GM12878 (cell line): ENCODE measurements at regions of chr3 and their contacts with region 1.

Region 1: GRCh38 chr3:105366326-105367062 is at the start of gene ALCAM:
- DNase-seq: peak; percentile 77
- ATAC-seq: peak; percentile 66
- H3K4me3 ChIP-seq: peak within 1 kb of the TSS; percentile 88
- H3K27ac ChIP-seq: peak within 1 kb of the TSS; percentile 99
- H3K4me1 ChIP-seq: peaks cover 2% of the 10 kb centered on the region; the same call in 1 of the 2 replicates
- H3K27me3 ChIP-seq: no peaks in the 10 kb centered on the region
- CTCF ChIP-seq: peak; percentile 46 to 74 (median 52); a peak in 5 of 6 replicates
- EP300 ChIP-seq: no peak
- POLR2A ChIP-seq: peak; percentile 82
- RAD21 ChIP-seq: peak; percentile 86
- polyA plus RNA-seq, gene ALCAM: 12.2 to 16.2 TPM

Region 2: DNA sequence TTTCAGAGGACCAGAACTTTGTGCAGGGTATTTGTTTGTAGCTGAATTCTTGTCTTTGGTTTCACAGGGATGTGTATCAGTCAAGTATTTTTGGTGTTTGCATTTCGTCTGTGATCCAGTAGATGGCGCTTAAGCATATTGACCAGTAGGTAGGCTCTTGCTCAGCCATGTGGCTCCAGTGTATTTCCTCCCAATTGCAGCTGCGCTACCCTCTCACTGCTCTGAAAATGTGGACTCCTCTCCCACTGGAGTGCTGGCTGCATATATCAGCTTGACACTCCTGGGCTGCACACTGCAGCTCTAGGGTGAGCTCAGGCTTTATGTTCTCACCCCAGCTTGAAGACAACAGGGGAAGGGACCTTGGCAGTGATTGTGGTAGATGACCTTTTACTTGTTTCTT is 1264.1 kb before region 1 on chr3:
- CTCF ChIA-PET with region 1: no interaction called
- POLR2A ChIA-PET with region 1: no interaction called
- RAD21 ChIA-PET with region 1: no interaction called
- SMC1A ChIA-PET with region 1: interaction called, 4 read pairs
- in situ Hi-C with region 1: no loop called
- intact Hi-C with region 1: loop called (anchors 5 kb)
- DNase-seq: peak; percentile 23
- ATAC-seq: peak; percentile 95
- H3K4me3 ChIP-seq: no peak overlapping the region
- H3K27ac ChIP-seq: no peak overlapping the region
- H3K4me1 ChIP-seq: no peaks in the 10 kb centered on the region
- H3K27me3 ChIP-seq: no peaks in the 10 kb centered on the region
- CTCF ChIP-seq: peak; percentile 66 to 75 (median 73)
- EP300 ChIP-seq: no peak
- POLR2A ChIP-seq: no peak
- RAD21 ChIP-seq: peak; percentile 61

Region 3: GRCh38 chr3:104279617-104280016 is 1086.9 kb before region 1 on chr3:
- CTCF ChIA-PET with region 1: interaction called, 3 read pairs
- POLR2A ChIA-PET with region 1: no interaction called
- RAD21 ChIA-PET with region 1: no interaction called
- SMC1A ChIA-PET with region 1: no interaction called
- in situ Hi-C with region 1: loop called (anchors 5 kb)
- intact Hi-C with region 1: no loop called
- DNase-seq: no peak
- ATAC-seq: no peak
- H3K4me3 ChIP-seq: no peak overlapping the region
- H3K27ac ChIP-seq: no peak overlapping the region
- H3K4me1 ChIP-seq: no peaks in the 10 kb centered on the region
- H3K27me3 ChIP-seq: no peaks in the 10 kb centered on the region
- CTCF ChIP-seq: no peak
- EP300 ChIP-seq: no peak
- POLR2A ChIP-seq: no peak
- RAD21 ChIP-seq: no peak

Region 4: DNA sequence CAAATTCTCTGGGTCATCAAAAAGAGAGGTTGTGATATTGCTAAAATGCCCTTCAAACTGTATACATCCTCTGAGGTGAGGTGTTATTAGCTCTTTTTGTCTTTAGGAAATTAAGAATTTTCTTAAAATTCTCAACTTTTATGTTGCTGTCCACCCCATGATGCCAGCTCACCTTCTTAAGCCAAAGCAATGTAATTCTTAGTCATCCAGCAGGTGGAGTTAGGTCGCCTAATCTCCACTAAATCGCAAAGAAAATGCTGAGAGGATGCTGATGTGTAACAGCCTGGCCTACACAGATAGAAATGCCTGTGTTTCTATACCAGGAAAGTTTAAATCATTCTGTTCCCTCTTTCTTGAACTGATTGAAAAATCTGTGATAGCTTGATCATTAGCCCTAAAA is 769.9 kb before region 1 on chr3:
- CTCF ChIA-PET with region 1: interaction called, 12 read pairs
- POLR2A ChIA-PET with region 1: no interaction called
- RAD21 ChIA-PET with region 1: interaction called, 4 read pairs
- SMC1A ChIA-PET with region 1: interaction called, 7 read pairs
- in situ Hi-C with region 1: loop called (anchors 10 kb)
- intact Hi-C with region 1: loop called (anchors 2 kb)
- DNase-seq: peak; percentile 20
- ATAC-seq: peak; percentile 91
- H3K4me3 ChIP-seq: no peak overlapping the region
- H3K27ac ChIP-seq: no peak overlapping the region
- H3K4me1 ChIP-seq: no peaks in the 10 kb centered on the region
- H3K27me3 ChIP-seq: no peaks in the 10 kb centered on the region
- CTCF ChIP-seq: peak; percentile 52 to 56 (median 56)
- EP300 ChIP-seq: no peak
- POLR2A ChIP-seq: no peak
- RAD21 ChIP-seq: peak; percentile 78

Region 5: DNA sequence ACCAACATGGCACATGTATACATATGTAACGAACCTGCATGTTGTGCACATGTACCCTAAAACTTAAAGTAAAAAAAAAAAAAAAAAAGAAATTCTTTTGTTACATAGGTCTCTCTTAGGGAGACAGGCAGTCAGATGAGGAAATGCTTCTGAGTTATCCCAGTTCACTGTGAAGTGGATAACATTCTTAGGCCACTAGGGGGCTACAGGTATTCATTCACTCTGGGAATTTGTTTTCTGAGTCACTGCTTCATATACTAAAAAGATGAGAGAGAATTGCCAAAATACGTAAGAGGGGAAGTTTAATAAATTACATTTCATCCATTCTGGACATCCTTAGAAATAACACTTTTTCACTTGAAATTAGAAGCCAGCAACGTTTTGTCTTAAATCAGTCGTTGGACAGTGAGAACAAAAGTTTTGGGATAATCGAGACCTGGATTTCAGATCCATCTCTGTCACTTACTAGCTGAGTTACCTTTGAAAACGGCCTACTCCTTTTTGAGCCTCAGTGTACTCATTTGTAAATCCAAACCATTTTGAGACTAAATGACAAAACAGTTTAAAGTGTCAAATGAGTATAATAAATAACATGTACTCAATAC is 738.2 kb before region 1 on chr3:
- CTCF ChIA-PET with region 1: no interaction called
- POLR2A ChIA-PET with region 1: no interaction called
- RAD21 ChIA-PET with region 1: no interaction called
- SMC1A ChIA-PET with region 1: no interaction called
- in situ Hi-C with region 1: no loop called
- intact Hi-C with region 1: loop called (anchors 2 kb)
- DNase-seq: no peak
- ATAC-seq: peak; percentile 84
- H3K4me3 ChIP-seq: no peak overlapping the region
- H3K27ac ChIP-seq: no peak overlapping the region
- H3K4me1 ChIP-seq: no peaks in the 10 kb centered on the region
- H3K27me3 ChIP-seq: no peaks in the 10 kb centered on the region
- CTCF ChIP-seq: peak; percentile 41 to 52 (median 50); a peak in 5 of 6 replicates
- EP300 ChIP-seq: no peak
- POLR2A ChIP-seq: no peak
- RAD21 ChIP-seq: peak; percentile 61

Region 6: DNA sequence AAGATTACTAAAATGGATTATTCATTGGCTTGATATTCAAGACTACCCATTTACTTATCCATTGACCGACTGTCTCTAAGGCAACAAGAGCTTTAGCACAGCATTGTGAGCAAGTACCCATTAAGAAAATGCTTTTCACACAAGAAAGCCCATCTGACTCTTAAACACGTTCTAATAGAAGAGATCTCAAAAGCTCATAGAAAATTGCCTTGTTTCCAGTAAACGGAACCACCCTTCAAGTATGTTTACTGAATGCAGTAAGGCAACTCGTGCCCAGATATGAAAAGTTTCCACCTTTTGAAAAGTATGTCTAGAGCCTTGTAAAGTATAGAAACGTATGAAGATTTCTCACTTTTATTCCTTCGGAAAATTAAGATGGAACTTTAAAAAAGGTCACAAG is 655.1 kb before region 1 on chr3:
- CTCF ChIA-PET with region 1: no interaction called
- POLR2A ChIA-PET with region 1: no interaction called
- RAD21 ChIA-PET with region 1: no interaction called
- SMC1A ChIA-PET with region 1: no interaction called
- in situ Hi-C with region 1: no loop called
- intact Hi-C with region 1: no loop called
- DNase-seq: no peak
- ATAC-seq: no peak
- H3K4me3 ChIP-seq: no peak overlapping the region
- H3K27ac ChIP-seq: no peak overlapping the region
- H3K4me1 ChIP-seq: no peaks in the 10 kb centered on the region
- H3K27me3 ChIP-seq: no peaks in the 10 kb centered on the region
- CTCF ChIP-seq: no peak
- EP300 ChIP-seq: no peak
- POLR2A ChIP-seq: no peak
- RAD21 ChIP-seq: no peak

Region 7: DNA sequence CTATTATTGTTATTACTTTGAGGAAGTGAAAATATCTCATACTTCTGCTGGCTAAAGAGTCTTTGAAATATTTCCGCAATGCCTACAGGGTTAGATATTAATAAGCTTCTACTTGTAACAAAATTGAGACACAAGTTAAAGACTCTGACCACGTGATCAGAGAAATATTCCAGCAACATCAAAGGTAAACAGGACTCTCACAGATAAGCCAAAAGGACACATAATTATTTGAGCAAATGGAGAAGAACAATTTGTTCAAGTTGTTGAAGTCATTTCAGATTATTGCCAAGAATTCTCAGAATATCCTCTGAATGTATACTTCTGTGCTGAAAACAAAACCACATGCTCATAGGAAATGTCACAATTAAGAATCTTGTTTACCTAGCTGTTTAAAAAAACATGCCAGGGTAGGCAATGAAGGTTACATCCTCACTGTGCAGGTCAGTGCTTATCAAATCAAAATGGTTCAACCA is 225.6 kb before region 1 on chr3:
- CTCF ChIA-PET with region 1: no interaction called
- POLR2A ChIA-PET with region 1: no interaction called
- RAD21 ChIA-PET with region 1: no interaction called
- SMC1A ChIA-PET with region 1: no interaction called
- in situ Hi-C with region 1: no loop called
- intact Hi-C with region 1: loop called (anchors 10 kb)
- DNase-seq: no peak
- ATAC-seq: peak; percentile 50
- H3K4me3 ChIP-seq: no peak overlapping the region
- H3K27ac ChIP-seq: no peak overlapping the region
- H3K4me1 ChIP-seq: no peaks in the 10 kb centered on the region; the same call in 1 of the 2 replicates
- H3K27me3 ChIP-seq: no peaks in the 10 kb centered on the region
- CTCF ChIP-seq: no peak
- EP300 ChIP-seq: no peak
- POLR2A ChIP-seq: no peak
- RAD21 ChIP-seq: no peak

Region 8: DNA sequence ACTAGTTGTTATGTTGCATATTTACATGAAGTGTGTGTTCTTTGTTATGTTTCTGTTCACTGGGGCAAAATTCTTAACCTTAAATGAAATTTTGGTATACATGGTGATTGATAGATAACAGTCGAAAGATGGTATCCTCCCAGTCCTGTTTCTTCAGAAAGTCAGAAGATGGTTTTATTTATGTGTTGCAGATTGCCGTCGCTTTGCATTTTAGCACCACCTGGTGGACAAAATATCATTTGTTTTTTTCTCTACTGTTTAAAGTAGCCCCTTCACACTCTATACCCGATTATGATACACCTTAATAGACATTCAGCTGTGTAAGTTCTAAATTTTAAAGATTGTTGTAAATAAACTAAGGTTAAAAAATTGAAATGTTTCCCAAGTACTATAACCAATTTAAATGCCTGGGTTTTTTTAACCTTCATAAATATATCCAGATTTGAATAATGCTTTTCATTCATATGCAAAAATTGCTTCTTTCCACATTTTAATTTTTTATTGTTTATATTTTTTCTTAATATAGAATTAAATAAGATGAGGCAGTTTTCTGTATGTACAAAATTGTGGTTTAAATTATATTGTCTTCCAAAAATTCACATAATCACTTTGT is 152.4 kb after region 1 on chr3:
- CTCF ChIA-PET with region 1: interaction called, 71 read pairs
- POLR2A ChIA-PET with region 1: interaction called, 3 read pairs
- RAD21 ChIA-PET with region 1: interaction called, 62 read pairs
- SMC1A ChIA-PET with region 1: interaction called, 64 read pairs
- in situ Hi-C with region 1: no loop called
- intact Hi-C with region 1: loop called (anchors 2 kb)
- DNase-seq: peak; percentile 49
- ATAC-seq: peak; percentile 96
- H3K4me3 ChIP-seq: no peak overlapping the region
- H3K27ac ChIP-seq: no peak overlapping the region
- H3K4me1 ChIP-seq: no peaks in the 10 kb centered on the region
- H3K27me3 ChIP-seq: no peaks in the 10 kb centered on the region
- CTCF ChIP-seq: peak; percentile 44 to 67 (median 54); a peak in 5 of 6 replicates
- EP300 ChIP-seq: no peak
- POLR2A ChIP-seq: no peak
- RAD21 ChIP-seq: peak; percentile 85